Endothelial cell of umbilical vein (primary cell): ENCODE measurements at regions of chr11 and their contacts with region 1.

Region 1: GRCh38 chr11:82858556-82859091 is 41.6 kb downstream of the PRCP start:
- DNase-seq: peak; percentile 89
- H3K4me3 ChIP-seq: peak overlapping the region in 1 of 3 experiments; percentile 50
- H3K27ac ChIP-seq: peak overlapping the region; percentile 98
- H3K4me1 ChIP-seq: peaks cover 52% of the 10 kb centered on the region
- H3K27me3 ChIP-seq: no peaks in the 10 kb centered on the region
- CTCF ChIP-seq: no peak
- POLR2A ChIP-seq: no peak

Region 2: GRCh38 chr11:82790723-82791484 is 67.7 kb before region 1 on chr11:
- CTCF ChIA-PET with region 1: interaction called, 4 read pairs
- POLR2A ChIA-PET with region 1: no interaction called
- dilution Hi-C with region 1: no loop called
- intact Hi-C with region 1: loop called (anchors 1 kb)
- DNase-seq: peak; percentile 45
- H3K4me3 ChIP-seq: no peak overlapping the region
- H3K27ac ChIP-seq: no peak overlapping the region
- H3K4me1 ChIP-seq: peaks cover 43% of the 10 kb centered on the region
- H3K27me3 ChIP-seq: no peaks in the 10 kb centered on the region
- CTCF ChIP-seq: no peak
- POLR2A ChIP-seq: no peak

Region 3: GRCh38 chr11:82818409-82819043 is 40.1 kb before region 1 on chr11:
- CTCF ChIA-PET with region 1: interaction called, 4 read pairs
- POLR2A ChIA-PET with region 1: no interaction called
- dilution Hi-C with region 1: no loop called
- intact Hi-C with region 1: loop called (anchors 5 kb)
- DNase-seq: no peak
- H3K4me3 ChIP-seq: no peak overlapping the region
- H3K27ac ChIP-seq: no peak overlapping the region
- H3K4me1 ChIP-seq: no peaks in the 10 kb centered on the region
- H3K27me3 ChIP-seq: no peaks in the 10 kb centered on the region
- CTCF ChIP-seq: no peak
- POLR2A ChIP-seq: no peak

Region 4: DNA sequence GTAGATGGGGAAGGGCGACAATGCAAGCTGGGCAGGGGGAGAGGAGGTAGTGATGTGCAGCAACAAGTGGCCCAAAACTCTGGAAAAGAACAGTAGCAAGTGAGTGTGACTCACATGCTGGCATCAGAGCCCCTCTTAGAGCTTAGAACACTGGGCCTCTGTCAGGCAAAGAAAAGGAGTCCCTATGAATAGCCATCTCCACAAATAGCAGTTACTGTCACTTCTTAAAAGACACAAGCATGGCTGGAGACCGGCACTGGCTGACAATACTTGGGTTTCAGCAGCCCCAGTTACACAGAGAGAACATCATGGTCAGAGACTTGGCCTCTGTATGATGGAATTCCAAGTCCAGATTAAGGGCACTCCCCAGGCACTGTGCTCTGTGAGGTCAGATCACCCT is 16.6 kb before region 1 on chr11:
- CTCF ChIA-PET with region 1: interaction called, 7 read pairs
- POLR2A ChIA-PET with region 1: no interaction called
- dilution Hi-C with region 1: no loop called
- intact Hi-C with region 1: loop called (anchors 1 kb)
- DNase-seq: no peak
- H3K4me3 ChIP-seq: no peak overlapping the region
- H3K27ac ChIP-seq: no peak overlapping the region
- H3K4me1 ChIP-seq: no peaks in the 10 kb centered on the region
- H3K27me3 ChIP-seq: no peaks in the 10 kb centered on the region
- CTCF ChIP-seq: no peak
- POLR2A ChIP-seq: no peak

Region 5: GRCh38 chr11:82889133-82890001 is 30.7 kb after region 1 on chr11:
- CTCF ChIA-PET with region 1: no interaction called
- POLR2A ChIA-PET with region 1: no interaction called
- dilution Hi-C with region 1: no loop called
- intact Hi-C with region 1: loop called (anchors 1 kb)
- DNase-seq: peak; percentile 96
- H3K4me3 ChIP-seq: no peak overlapping the region
- H3K27ac ChIP-seq: peak overlapping the region; percentile 63
- H3K4me1 ChIP-seq: peaks cover 51% of the 10 kb centered on the region
- H3K27me3 ChIP-seq: no peaks in the 10 kb centered on the region
- CTCF ChIP-seq: no peak
- POLR2A ChIP-seq: peak; percentile 73

Region 6: DNA sequence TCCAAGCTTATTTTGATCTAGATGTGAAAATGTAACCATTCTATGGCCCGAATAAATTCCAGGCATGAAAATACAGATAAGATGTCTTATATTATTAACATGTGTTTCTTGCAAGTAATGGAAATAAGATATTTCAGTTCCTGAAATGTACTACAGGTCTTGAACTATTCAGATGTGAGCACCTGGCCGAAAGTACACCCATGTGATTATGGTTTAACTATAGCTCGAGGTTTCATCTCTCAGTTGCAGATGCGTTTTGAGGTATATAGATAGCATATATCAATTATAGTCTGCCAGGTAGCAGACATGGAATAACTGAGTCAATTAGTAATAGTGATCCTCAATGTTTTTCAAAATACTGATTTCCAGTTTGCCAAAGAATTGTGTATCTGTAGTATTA is 111.2 kb after region 1 on chr11:
- CTCF ChIA-PET with region 1: no interaction called
- POLR2A ChIA-PET with region 1: no interaction called
- dilution Hi-C with region 1: no loop called
- intact Hi-C with region 1: no loop called
- DNase-seq: no peak
- H3K4me3 ChIP-seq: no peak overlapping the region
- H3K27ac ChIP-seq: no peak overlapping the region
- H3K4me1 ChIP-seq: no peaks in the 10 kb centered on the region
- H3K27me3 ChIP-seq: no peaks in the 10 kb centered on the region
- CTCF ChIP-seq: no peak
- POLR2A ChIP-seq: no peak